Dendritic cell treated with granulocyte-macrophage colony-stimulating factor and Interleukin-4, amounts not matched to agents 40 ng/mL and 50 ng/mL, for 4 days (primary cell): ENCODE measurements at regions of chr16 and their contacts with region 1.

Region 1: DNA sequence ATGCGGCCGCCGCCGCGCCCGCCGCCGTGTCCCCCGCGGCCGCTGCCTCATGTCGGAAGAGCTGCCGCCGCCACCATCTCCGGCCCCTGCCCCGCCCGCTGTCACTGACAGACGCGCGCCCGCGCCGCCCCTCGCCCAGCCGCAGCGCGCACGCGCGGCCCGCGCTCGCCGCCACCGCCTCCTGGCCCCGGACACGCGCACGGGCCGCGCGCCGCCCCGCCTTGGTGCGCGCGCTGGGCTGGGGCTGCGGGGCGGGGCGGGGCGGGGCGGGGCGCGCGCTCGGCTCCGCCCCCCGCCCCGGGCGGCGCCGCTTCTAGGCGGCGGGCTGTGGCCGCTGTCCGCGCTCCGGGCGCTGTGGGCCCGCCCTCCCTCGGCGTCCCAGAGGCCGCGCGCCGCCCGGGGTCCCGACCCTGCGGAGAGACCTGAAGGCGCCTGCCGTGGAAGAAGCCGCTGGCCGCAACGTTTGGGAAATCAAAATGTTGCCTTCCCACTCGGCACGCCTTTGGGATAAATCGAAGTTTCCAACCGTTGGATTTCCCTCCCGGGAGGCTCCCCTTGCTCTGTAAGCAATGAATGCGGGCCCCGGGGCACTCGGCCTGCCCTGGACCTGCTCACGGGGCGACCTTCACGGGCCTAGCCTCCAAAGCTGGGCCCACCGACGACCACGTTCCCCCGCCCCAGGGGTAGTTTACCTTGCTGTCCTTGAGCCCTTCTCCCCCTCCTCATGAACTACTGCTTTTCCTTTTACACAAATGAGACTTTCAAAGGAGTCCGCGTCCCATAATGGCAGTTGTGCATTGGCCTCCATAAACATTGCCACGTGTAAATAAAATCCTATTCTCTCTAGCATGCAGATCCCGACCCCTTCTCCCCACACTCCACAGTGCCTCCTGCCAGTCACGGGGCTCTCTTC is at the start of gene ADCY9:
- H3K4me3 Mint-ChIP-seq: peak within 1 kb of the TSS; percentile 84
- H3K27ac Mint-ChIP-seq: peak within 1 kb of the TSS; percentile 64
- H3K4me1 Mint-ChIP-seq: peaks cover 48% of the 10 kb centered on the region
- H3K27me3 Mint-ChIP-seq: peaks cover 38% of the 10 kb centered on the region

Region 2: DNA sequence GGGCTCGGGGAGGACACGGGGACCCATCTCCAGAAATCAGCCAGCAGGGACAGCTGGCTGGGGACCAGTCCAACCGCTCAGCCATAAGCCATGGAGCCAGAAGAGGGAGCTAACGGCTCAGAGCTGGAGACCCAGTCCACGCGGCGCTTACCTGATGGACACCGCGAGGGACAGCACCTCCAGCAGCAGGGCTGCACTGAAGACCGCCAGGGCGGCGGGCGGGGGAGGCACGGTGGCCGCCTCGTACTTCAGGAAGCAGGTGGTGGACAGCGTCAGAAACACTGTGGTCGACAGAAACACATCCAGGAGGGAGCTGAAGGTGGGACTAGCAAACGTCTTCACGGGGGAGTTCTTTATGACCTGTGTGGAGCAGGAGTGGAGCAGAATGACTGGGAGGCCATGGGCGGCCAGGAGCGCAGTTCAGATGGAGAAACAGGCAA is 133.5 kb before region 1 on chr16:
- intact Hi-C with region 1: loop called (anchors 10 kb)
- H3K4me3 Mint-ChIP-seq: peak overlapping the region; percentile 21
- H3K27ac Mint-ChIP-seq: peak overlapping the region; percentile 2
- H3K4me1 Mint-ChIP-seq: peaks cover 16% of the 10 kb centered on the region
- H3K27me3 Mint-ChIP-seq: peaks cover 6% of the 10 kb centered on the region